Tibial artery (tissue), 4 donors: ENCODE measurements at regions of chr15 and their contacts with region 1.

Region 1: GRCh38 chr15:72272213-72273002 is at the start of gene PARP6:
- DNase-seq: peak; percentile 99 to 100
- H3K4me3 ChIP-seq: peak within 1 kb of the TSS; percentile 81 to 98
- H3K27ac ChIP-seq: peak within 1 kb of the TSS; percentile 87 to 98
- H3K4me1 ChIP-seq: peaks cover 0 to 27% (median 19%) of the 10 kb centered on the region in 4 donors
- H3K27me3 ChIP-seq: no peaks in the 10 kb centered on the region
- CTCF ChIP-seq: peak; percentile 67 to 73

Region 2: GRCh38 chr15:72199711-72200212 is 72.6 kb before region 1 on chr15:
- intact Hi-C with region 1: loop called (anchors 5 kb)
- DNase-seq: peak; percentile 75 to 87
- H3K4me3 ChIP-seq: no peak overlapping the region
- H3K27ac ChIP-seq: peak overlapping the region in 1 of 2 donors; percentile 52
- H3K4me1 ChIP-seq: peaks cover 0 to 28% (median 17%) of the 10 kb centered on the region in 4 donors
- H3K27me3 ChIP-seq: peaks cover 0 to 4% of the 10 kb centered on the region in 2 donors
- CTCF ChIP-seq: peak; percentile 91 to 95

Region 3: DNA sequence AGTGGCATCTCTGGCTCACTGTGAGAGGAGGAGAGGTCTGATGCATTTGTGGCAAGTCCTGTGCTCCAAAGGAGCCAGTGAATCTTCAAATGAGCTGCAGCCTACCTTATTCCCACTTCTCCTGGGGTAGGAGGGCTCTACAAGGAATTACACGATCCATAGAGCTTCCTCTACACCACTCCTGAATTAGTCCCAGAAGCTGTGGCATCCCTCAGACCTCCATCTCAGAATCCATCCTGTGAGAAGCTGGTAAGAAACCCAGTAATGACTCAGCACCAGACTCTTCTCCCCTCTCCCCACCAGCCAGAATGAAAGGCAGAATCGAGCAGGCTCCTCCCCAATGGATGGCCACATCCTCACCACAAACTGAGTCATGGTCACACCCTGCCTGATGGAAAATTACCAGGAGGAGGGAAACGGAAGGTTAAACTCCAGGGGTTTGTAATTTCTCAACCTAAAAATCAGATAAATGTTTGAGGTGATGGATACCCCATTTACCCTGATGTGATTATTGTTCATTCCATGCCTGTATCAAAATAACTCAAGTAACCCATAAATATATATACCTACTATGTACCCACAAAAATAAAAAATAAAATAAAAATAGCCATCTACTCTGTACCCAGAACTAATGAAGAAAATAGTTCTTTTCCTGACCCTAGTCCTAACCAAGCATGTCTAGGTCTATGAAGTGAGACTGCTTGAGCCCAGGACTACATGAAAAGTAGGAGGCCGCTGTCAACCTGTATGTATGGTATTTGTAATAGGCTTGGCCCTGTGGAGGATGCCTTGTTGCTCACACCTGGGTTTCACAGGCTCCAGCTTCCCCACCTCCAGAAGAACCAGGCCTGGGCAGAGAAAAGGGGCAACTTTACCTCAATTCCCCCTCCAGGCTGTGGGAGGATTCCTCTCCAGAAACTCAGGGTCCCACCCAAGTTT is 34.9 kb before region 1 on chr15:
- intact Hi-C with region 1: loop called (anchors 5 kb)
- DNase-seq: peak; percentile 88 to 89
- H3K4me3 ChIP-seq: peak overlapping the region; percentile 5 to 22
- H3K27ac ChIP-seq: peak overlapping the region; percentile 56 to 73
- H3K4me1 ChIP-seq: peaks cover 0 to 21% (median 10%) of the 10 kb centered on the region in 4 donors
- H3K27me3 ChIP-seq: no peaks in the 10 kb centered on the region
- CTCF ChIP-seq: no peak